CD8-positive, alpha-beta memory T cell (primary cell): ENCODE measurements at regions of chr17 and their contacts with region 1.

Region 1: GRCh38 chr17:67974185-67974584 is 22.1 kb downstream of the C17orf58 start:
- DNase-seq: no peak
- H3K4me3 ChIP-seq: no peak overlapping the region
- H3K4me3 Mint-ChIP-seq: no peak overlapping the region
- H3K27ac ChIP-seq: no peak overlapping the region
- H3K27ac Mint-ChIP-seq: no peak overlapping the region
- H3K4me1 ChIP-seq: no peaks in the 10 kb centered on the region
- H3K4me1 Mint-ChIP-seq: no peaks in the 10 kb centered on the region
- H3K27me3 ChIP-seq: no peaks in the 10 kb centered on the region
- H3K27me3 Mint-ChIP-seq: no peaks in the 10 kb centered on the region

Region 2: DNA sequence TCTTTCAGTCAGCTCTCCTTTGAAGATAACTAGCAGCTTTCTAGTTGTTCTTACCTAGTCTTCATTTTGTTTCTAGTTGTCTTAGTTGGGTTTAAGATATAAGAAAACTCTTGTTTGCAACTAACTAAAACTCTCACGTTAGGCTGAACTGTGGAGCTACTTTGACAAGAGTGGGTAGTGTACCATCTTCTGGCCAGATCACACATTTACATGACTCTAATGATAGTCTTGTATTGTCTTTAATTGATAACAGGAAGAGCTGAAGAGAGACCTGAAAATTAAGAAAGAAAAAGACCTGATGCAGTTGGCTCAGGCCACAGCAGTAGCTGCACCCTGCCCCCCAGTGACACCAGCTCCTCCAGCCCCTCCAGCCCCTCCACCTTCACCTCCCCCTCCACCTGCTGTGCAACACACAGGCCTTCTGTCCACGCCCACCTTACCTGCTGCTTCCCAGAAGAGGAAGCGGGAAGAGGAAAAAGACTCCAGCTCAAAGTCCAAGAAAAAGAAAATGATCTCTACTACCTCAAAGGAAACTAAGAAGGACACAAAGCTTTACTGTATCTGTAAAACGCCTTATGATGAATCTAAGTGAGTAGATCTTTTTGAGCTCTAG is 14.8 kb before region 1 on chr17:
- CTCF ChIA-PET with region 1: no interaction called
- POLR2A ChIA-PET with region 1: no interaction called
- DNase-seq: no peak
- H3K4me3 ChIP-seq: no peak overlapping the region
- H3K4me3 Mint-ChIP-seq: no peak overlapping the region
- H3K27ac ChIP-seq: no peak overlapping the region
- H3K27ac Mint-ChIP-seq: peak overlapping the region in 6 of 8 donors; percentile 17 to 81 (median 67)
- H3K4me1 ChIP-seq: no peaks in the 10 kb centered on the region
- H3K4me1 Mint-ChIP-seq: peaks cover 4 to 5% (median 4%) of the 10 kb centered on the region in 3 donors
- H3K27me3 ChIP-seq: no peaks in the 10 kb centered on the region
- H3K27me3 Mint-ChIP-seq: peaks cover 0 to 1% of the 10 kb centered on the region in 2 donors

Region 3: GRCh38 chr17:68124873-68125870 is 151.0 kb after region 1 on chr17:
- CTCF ChIA-PET with region 1: no interaction called
- POLR2A ChIA-PET with region 1: no interaction called
- DNase-seq: no peak
- H3K4me3 ChIP-seq: no peak overlapping the region
- H3K4me3 Mint-ChIP-seq: no peak overlapping the region
- H3K27ac ChIP-seq: no peak overlapping the region
- H3K27ac Mint-ChIP-seq: peak overlapping the region in 5 of 8 donors; percentile 7 to 87 (median 39)
- H3K4me1 ChIP-seq: no peaks in the 10 kb centered on the region
- H3K4me1 Mint-ChIP-seq: peaks cover 17 to 24% (median 18%) of the 10 kb centered on the region in 3 donors
- H3K27me3 ChIP-seq: no peaks in the 10 kb centered on the region
- H3K27me3 Mint-ChIP-seq: no peaks in the 10 kb centered on the region

Region 4: DNA sequence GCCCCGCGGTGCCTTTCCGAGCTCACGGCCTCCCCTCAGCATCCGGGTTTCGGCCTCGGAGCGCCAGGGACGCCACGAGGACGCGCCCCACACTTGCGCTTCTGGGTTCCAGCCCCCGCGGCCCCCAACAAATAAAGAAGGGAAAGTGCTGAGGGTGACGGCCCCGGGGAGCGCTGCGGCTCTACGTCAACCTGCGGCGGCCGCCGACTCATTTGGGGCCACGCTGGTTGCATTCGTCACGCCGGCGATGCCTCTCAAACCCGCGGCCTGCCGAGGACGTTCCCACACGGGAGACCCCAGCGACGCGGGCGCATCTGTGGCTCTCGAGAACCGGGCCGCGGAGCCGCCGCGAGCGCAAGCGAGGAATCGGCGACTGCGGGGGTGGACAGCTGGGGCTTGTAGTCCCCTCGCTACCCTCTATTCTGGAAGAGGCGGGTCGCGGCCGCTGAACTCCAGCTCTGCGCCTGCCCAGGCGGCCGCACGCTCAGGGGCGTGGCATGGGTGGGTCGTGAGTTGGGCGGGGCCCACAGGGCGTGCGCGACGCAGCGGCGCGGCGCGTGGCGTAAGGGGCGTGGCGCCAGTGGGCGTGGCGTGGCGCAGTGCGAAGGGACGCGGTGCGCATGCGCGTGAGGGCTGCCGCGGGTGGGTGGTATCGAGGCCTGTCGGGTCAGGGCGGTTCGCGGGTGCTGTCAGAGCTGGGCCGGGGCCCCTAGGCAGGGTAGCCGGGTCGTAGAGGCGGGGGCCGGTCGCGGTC is 273.4 kb after region 1 on chr17 and contains the start of gene AMZ2:
- CTCF ChIA-PET with region 1: no interaction called
- POLR2A ChIA-PET with region 1: interaction called, 12 read pairs
- DNase-seq: peak; percentile 95 to 99 (median 98)
- H3K4me3 ChIP-seq: peak within 1 kb of the TSS; percentile 97
- H3K4me3 Mint-ChIP-seq: peak within 1 kb of the TSS; percentile 87 to 98 (median 96)
- H3K27ac ChIP-seq: peak within 1 kb of the TSS; percentile 96
- H3K27ac Mint-ChIP-seq: peak within 1 kb of the TSS; percentile 96 to 100 (median 98)
- H3K4me1 ChIP-seq: peaks cover 34% of the 10 kb centered on the region
- H3K4me1 Mint-ChIP-seq: peaks cover 35 to 63% (median 53%) of the 10 kb centered on the region in 3 donors
- H3K27me3 ChIP-seq: no peaks in the 10 kb centered on the region
- H3K27me3 Mint-ChIP-seq: peaks cover 0 to 8% of the 10 kb centered on the region in 2 donors
- total RNA-seq, gene AMZ2: 113 to 118 TPM